Panc1 (cell line): ENCODE measurements at regions of chr17 and their contacts with region 1.

Region 1: DNA sequence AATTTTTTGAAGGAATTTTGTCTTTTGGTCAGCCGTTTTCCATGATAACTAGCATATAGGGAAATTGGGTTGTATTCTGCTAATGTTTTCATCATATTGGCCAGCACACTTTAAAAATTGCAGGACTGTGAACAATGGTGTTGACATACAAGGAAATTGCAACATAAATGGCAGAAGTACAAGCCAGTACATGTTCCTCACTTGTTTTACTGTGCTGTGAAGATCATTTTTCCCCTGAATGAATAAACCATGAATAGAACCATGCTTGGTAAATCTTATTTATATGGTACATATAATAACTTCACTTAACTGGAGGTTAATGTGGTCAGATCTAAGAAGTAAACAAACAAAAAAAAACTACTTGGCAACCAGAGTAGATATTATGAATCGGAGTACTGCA is 22.8 kb downstream of the OMG start:
- DNase-seq: no peak
- ATAC-seq: no peak
- H3K4me3 ChIP-seq: no peak overlapping the region
- H3K27ac ChIP-seq: no peak overlapping the region
- H3K4me1 ChIP-seq: peaks cover 4% of the 10 kb centered on the region; the same call in 1 of the 2 replicates
- H3K27me3 ChIP-seq: no peaks in the 10 kb centered on the region
- CTCF ChIP-seq: no peak

Region 2: GRCh38 chr17:31425282-31426040 is 151.2 kb after region 1 on chr17:
- CTCF ChIA-PET with region 1: no interaction called
- POLR2A ChIA-PET with region 1: interaction called, 10 read pairs
- in situ Hi-C with region 1: no loop called
- intact Hi-C with region 1: no loop called
- DNase-seq: no peak
- ATAC-seq: no peak
- H3K4me3 ChIP-seq: no peak overlapping the region
- H3K27ac ChIP-seq: no peak overlapping the region
- H3K4me1 ChIP-seq: no peaks in the 10 kb centered on the region
- H3K27me3 ChIP-seq: no peaks in the 10 kb centered on the region
- CTCF ChIP-seq: no peak